ENCODE measurements at regions of chr7 and their contacts with region 1.

Region 1: GRCh38 chr7:4797858-4798705 is 22.7 kb downstream of the AP5Z1 start:
- DNase-seq: peak in 1 of 2 donors; percentile 88
- ATAC-seq: peak; percentile 81
- H3K4me3 ChIP-seq: no peak overlapping the region
- H3K27ac ChIP-seq: no peak overlapping the region
- H3K4me1 ChIP-seq: no peaks in the 10 kb centered on the region
- H3K27me3 ChIP-seq: no peaks in the 10 kb centered on the region

Region 2: GRCh38 chr7:4319280-4319679 is 478.8 kb before region 1 on chr7:
- intact Hi-C with region 1: no loop called
- DNase-seq: no peak
- ATAC-seq: no peak
- H3K4me3 ChIP-seq: no peak overlapping the region
- H3K27ac ChIP-seq: no peak overlapping the region
- H3K4me1 ChIP-seq: no peaks in the 10 kb centered on the region
- H3K27me3 ChIP-seq: peaks cover 0 to 3% of the 10 kb centered on the region in 2 donors

Region 3: GRCh38 chr7:4883374-4884144 is 85.5 kb after region 1 on chr7 and contains the start of gene RADIL:
- intact Hi-C with region 1: loop called (anchors 2 to 5 kb)
- DNase-seq: peak; percentile 95 to 98
- ATAC-seq: peak; percentile 93
- H3K4me3 ChIP-seq: peak within 1 kb of the TSS; percentile 74 to 85
- H3K27ac ChIP-seq: peak within 1 kb of the TSS; percentile 11 to 29
- H3K4me1 ChIP-seq: peaks cover 0 to 1% of the 10 kb centered on the region in 2 donors
- H3K27me3 ChIP-seq: no peaks in the 10 kb centered on the region
- total RNA-seq, gene RADIL: 4.0 to 11.0 TPM

Region 4: DNA sequence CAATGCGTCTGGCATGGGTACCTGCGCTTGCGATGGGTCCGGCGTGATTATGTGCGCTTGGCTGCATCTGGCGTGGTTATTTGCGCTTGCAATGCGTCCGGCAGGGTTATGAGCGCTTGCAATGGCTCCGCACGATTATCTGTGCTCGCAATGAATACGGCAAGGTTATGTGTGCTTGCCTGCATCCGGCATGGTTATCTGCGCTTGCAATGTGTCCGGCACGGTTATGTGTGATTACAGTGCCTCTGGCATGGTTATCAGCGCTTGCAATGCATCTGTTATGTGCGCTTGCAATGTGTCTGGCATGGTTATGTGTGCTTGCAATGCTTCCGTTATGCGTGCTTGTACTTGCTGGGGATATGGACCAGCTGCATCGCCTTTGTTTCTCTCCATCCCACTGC is 285.2 kb after region 1 on chr7:
- intact Hi-C with region 1: loop called (anchors 2 kb)
- DNase-seq: no peak
- ATAC-seq: no peak
- H3K4me3 ChIP-seq: no peak overlapping the region
- H3K27ac ChIP-seq: no peak overlapping the region
- H3K4me1 ChIP-seq: no peaks in the 10 kb centered on the region
- H3K27me3 ChIP-seq: no peaks in the 10 kb centered on the region

Region 5: DNA sequence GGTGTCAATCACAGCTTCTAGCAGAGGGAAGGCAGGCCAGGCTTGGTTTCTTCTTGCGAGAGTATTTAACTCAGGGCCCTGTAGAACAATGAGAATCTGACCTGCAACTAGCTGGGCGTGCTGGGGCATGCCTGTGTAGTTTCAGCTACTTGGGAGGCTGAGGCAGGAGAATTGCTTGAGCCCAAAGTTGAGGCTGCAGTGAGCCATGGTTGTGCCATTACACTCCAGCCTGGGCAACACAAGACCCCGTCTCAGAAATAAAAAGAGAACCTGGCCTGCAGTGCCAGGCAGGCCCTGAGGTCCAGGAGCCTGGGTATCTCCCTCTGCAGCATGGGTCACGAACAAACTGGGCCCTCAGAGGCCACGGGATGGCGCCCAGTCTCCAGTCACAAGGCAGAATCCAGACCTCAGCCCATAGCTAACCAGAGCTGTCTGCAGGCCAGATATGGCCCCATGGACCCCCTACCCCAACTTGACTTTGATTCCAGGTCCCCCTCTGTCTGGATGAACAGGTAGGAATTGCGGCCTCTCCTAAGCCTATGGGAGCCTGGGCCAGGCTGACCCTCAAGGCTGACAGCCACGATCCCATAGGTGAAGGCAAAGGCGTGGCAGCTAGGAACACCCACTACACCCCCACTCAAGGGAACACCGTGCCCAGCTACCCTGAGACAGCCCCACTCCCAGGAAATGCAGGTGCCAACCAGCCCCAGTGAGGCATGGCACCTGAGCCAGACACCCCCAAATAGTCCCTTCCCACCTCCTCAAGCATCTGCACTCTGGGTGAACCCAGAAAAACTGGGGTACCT is 728.2 kb after region 1 on chr7:
- intact Hi-C with region 1: no loop called
- DNase-seq: peak; percentile 66 to 83
- ATAC-seq: no peak
- H3K4me3 ChIP-seq: peak overlapping the region in 1 of 2 donors; percentile 89
- H3K27ac ChIP-seq: peak overlapping the region in 1 of 2 donors; percentile 41
- H3K4me1 ChIP-seq: no peaks in the 10 kb centered on the region
- H3K27me3 ChIP-seq: peaks cover 0 to 2% of the 10 kb centered on the region in 2 donors

Measured in aorta (tissue), 5 donors.